ENCODE measurements at regions of chr2 and their contacts with region 1.

Region 1: DNA sequence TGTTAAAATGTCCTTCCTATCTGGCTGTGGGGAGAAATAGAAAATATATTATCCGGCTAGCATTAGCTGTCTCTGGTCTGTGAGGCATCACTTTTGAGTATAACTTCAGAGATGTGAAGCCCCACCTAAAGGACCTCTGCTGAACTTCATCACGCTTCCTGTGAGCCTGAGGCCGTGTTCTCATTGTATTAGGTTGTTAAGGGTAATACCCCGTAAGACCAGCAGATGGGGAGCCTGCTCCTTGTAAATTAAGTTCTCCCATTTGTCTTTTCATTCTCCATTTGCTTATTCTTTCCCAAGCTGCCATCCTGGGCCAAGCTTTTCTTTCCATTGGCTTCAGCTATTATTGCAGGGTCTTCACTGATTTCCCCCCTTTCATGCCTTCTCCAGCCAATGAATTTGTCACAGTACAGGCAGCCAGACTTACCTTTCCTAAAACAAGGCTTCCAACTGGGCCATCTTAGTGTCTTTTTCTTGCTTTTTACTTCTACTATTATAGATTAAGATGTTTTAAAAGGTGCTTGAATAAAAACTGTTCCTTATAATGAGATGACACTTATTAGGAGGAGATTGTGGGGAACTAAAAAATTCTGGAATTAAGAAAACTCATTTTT is 12.4 kb downstream of the NIF3L1 start:
- DNase-seq: peak; percentile 80
- H3K4me3 ChIP-seq: no peak overlapping the region
- H3K27ac ChIP-seq: no peak overlapping the region
- H3K4me1 ChIP-seq: no peaks in the 10 kb centered on the region
- H3K27me3 ChIP-seq: no peaks in the 10 kb centered on the region
- CTCF ChIP-seq: peak; percentile 73 to 84

Region 2: DNA sequence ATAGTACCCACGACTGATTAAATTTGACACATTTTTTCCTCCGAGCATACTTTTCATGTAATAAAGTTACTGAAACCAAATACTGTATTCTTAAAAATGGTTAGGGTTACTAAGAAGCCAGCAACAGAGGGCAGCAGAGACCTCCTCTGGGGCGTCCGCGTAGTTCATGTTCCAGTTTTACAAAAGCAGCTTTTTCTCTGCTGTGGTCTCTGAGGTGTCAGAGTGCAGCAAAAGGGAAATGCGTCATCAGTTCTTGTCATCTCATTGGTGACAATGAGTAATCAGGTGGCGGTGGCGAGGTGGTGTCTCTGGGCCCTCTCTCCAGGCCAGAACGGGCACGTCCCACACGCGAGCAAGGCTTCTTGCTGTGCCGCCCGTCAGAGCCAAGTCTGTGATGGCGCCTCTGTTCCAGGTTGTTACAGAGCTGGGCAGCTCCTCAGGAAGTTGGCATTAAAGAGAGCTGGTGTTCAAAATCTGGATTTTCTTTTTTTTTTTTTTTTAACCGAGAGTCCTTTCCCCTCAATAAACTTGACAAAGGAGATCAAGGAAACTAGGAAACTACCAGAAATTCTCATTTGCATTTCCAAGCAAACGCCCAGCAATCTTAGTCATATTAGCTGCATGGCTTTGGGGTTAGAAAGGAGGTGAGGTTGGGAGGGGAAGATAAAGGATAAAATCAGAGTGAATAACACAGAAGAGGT is 188.4 kb before region 1 on chr2:
- CTCF ChIA-PET with region 1: no interaction called
- dilution Hi-C with region 1: no loop called
- in situ Hi-C with region 1: no loop called
- intact Hi-C with region 1: loop called (anchors 1 kb)
- DNase-seq: peak; percentile 89
- H3K4me3 ChIP-seq: peak overlapping the region; percentile 34
- H3K27ac ChIP-seq: peak overlapping the region; percentile 59
- H3K4me1 ChIP-seq: peaks cover 9% of the 10 kb centered on the region
- H3K27me3 ChIP-seq: no peaks in the 10 kb centered on the region
- CTCF ChIP-seq: peak; percentile 84 to 91

Region 3: DNA sequence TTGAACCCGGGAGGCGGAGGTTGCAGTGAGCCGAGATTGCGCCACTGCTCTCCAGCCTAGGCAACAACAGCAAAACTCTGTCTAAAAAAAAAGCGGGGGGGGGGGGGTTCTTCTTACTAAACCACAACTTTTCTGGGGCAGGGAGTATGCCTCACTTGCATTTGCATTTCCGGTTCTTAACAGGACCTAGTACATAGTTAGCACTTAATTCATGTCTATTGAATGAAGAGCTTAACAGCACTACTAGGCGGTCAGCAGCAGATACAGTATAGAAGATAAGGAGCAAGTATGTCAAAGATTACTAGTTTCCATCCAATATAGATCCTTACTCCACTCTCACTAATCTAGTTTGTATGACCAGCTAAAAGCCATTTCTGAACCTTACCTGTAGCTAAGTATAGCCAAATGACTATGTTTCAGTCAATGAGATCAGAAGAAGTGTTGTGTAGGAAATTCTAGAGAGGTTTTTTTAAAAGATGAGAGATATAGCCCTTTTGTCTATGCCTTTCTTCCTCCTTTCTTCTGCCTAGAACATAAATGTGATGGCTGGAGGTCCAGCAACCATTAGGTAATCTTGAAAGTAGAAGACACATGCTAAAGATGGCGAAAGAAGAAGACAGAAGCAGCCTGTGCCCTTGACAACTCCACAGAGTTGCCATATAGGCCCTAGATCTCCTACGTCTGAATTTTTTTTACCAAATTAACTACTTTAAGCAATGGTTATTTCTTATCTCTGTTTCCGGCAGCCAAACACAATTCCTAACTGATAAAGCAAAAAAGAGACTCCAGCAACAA is 158.6 kb after region 1 on chr2:
- CTCF ChIA-PET with region 1: no interaction called
- dilution Hi-C with region 1: no loop called
- in situ Hi-C with region 1: loop called in 1 of 2 experiments (anchors 10 kb)
- intact Hi-C with region 1: no loop called
- DNase-seq: no peak
- H3K4me3 ChIP-seq: no peak overlapping the region
- H3K27ac ChIP-seq: no peak overlapping the region
- H3K4me1 ChIP-seq: no peaks in the 10 kb centered on the region
- H3K27me3 ChIP-seq: no peaks in the 10 kb centered on the region
- CTCF ChIP-seq: no peak

Region 4: DNA sequence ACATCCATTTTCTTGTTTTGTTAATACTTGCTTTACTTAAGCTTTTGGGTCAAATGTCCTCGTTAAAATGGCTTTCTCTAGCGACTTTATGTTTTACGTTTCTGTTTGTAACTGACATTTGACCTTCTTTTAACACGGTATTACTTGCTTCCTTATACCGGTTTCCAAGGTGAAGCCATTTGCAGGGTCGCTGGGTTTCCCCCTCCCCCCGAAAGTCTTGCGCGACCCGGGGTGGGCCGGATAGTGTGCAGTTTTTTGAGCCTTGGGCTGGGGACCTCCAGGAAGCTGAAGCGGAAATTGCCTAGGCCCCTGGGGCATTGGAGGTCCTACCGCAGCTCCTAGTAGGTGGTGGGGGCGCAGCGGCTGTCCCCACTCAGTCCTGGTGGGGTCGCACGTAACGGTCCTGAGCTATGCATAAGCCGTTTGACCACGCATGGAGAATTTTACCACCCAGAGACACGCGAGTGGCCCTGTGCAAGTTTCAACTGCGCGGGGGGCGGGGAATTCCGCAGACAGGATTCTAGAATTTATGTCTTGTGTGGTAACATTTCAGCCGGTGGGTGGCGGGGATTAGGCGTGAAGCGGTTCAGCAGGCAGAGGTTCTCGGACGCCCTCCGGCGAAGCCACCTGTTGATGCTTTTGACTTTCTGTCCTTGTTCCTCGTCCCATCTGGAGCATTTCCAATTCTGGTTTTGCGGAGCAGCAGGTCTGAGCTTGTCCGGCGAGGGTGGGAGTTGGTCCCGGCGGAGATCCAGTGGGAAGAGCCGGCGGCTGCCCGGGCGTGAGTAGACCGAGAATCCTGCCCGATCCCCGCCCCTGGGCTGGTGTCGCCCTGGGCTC is 216.8 kb after region 1 on chr2:
- CTCF ChIA-PET with region 1: no interaction called
- dilution Hi-C with region 1: no loop called
- in situ Hi-C with region 1: no loop called
- intact Hi-C with region 1: loop called (anchors 2 kb)
- DNase-seq: peak; percentile 98
- H3K4me3 ChIP-seq: peak overlapping the region; percentile 70 to 77 (median 74)
- H3K27ac ChIP-seq: peak overlapping the region; percentile 90
- H3K4me1 ChIP-seq: peaks cover 34% of the 10 kb centered on the region
- H3K27me3 ChIP-seq: no peaks in the 10 kb centered on the region
- CTCF ChIP-seq: peak; percentile 18 to 64

Region 5: GRCh38 chr2:201171259-201171814 is 269.8 kb after region 1 on chr2:
- CTCF ChIA-PET with region 1: no interaction called
- dilution Hi-C with region 1: no loop called
- in situ Hi-C with region 1: loop called (anchors 10 kb)
- intact Hi-C with region 1: no loop called
- DNase-seq: no peak
- H3K4me3 ChIP-seq: no peak overlapping the region
- H3K27ac ChIP-seq: no peak overlapping the region
- H3K4me1 ChIP-seq: no peaks in the 10 kb centered on the region
- H3K27me3 ChIP-seq: no peaks in the 10 kb centered on the region
- CTCF ChIP-seq: no peak

Region 6: DNA sequence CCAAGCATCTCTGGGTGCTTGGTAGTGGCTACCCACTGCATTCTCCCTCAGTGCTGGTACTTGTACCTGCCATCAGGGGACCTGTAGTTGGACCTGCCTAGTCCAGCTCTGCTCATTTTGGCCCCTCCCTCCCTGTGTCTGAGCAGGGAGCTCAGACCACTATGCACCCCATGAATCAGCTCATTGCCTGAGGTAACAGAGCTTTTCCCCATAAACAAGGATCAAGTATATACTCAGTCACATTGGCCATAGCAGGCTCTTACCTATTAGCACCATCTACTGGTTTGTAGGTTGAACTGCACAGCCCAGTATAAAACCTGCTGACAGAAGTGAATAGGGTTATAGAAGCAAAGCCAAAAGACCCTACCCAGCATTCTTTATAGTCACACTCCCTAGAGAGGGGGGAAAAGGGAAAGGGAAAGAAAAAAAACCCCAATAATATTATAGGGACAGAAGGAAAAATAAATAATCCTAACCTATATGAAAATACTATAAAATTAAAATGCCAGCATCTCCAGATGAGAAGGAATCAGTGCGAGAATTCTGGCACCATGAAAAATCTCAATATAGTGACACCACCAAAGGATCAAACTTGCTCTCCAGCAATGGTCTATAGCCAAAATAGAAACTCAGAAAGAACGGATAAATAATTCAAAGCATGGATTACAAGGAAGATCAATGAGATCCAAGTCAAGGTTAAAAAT is 462.4 kb after region 1 on chr2:
- CTCF ChIA-PET with region 1: no interaction called
- dilution Hi-C with region 1: no loop called
- in situ Hi-C with region 1: no loop called
- intact Hi-C with region 1: loop called (anchors 5 kb)
- DNase-seq: peak; percentile 70
- H3K4me3 ChIP-seq: no peak overlapping the region
- H3K27ac ChIP-seq: no peak overlapping the region
- H3K4me1 ChIP-seq: peaks cover 5% of the 10 kb centered on the region
- H3K27me3 ChIP-seq: no peaks in the 10 kb centered on the region
- CTCF ChIP-seq: peak; percentile 84 to 87